ENCODE measurements at regions of chr3 and their contacts with region 1.

Region 1: DNA sequence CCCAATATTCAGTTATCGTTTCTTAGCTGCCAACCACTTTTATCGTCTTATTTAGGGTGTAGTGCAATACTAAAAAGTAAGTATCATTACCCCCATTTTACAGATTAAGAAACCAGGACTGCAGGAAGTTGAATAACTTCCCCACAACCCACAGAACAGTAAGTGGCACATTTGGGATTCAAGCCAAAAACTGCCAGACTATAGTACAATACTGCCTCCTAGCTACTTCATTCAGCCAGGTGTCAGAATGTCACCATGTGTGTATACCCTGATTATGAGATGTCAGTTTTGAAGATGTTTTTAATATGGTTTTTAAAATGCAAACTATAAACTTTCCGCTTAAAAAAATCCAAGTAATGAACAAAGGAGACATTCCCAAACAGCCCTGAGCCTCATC is 74.2 kb upstream of the PROK2 start:
- DNase-seq: no peak
- H3K4me3 ChIP-seq: no peak overlapping the region
- H3K27ac ChIP-seq: no peak overlapping the region
- H3K4me1 ChIP-seq: peaks cover 7 to 13% (median 9%) of the 10 kb centered on the region in 4 experiments
- H3K27me3 ChIP-seq: no peaks in the 10 kb centered on the region
- CTCF ChIP-seq: peak in 2 of 3 experiments; percentile 77 to 82; a peak in 3 of 4 replicates
- EP300 ChIP-seq: no peak
- POLR2A ChIP-seq: no peak
- RAD21 ChIP-seq: peak; percentile 93 to 97

Region 2: DNA sequence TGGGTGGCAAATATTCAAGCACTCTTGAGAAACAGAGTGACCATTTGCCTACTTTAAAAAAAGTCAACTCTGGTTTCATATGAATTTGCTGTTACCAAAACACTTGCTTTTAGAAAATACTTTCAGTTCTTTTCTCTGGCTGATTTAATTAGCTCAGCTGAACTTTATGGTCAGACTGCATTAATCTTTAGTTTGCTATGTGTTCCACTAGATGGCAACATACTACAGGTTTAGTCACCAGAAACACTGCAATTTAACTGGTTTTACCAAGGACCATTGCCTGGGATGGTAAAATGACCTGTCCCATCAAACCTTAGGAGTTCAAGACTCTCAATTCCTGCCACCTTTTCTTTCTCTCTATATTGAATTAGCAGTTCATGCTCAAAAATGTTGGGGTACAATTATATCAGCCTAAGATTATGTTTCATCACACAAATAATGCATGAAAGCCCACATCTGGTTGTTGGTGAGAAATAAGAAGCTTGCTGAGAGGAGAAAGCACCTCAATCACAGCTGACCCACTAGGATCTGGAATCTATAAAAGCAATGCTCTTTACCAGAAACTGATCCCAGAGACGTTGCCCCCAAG is 148.1 kb before region 1 on chr3:
- CTCF ChIA-PET with region 1: interaction called, 66 read pairs
- POLR2A ChIA-PET with region 1: interaction called, 4 read pairs
- DNase-seq: no peak
- H3K4me3 ChIP-seq: no peak overlapping the region
- H3K27ac ChIP-seq: no peak overlapping the region
- H3K4me1 ChIP-seq: no peaks in the 10 kb centered on the region
- H3K27me3 ChIP-seq: no peaks in the 10 kb centered on the region
- CTCF ChIP-seq: peak in 2 of 3 experiments; percentile 65 to 74; a peak in 3 of 4 replicates
- EP300 ChIP-seq: no peak
- POLR2A ChIP-seq: no peak
- RAD21 ChIP-seq: peak; percentile 90 to 94

Measured in H1 (cell line).